ENCODE measurements at regions of chr16 and their contacts with region 1.

Region 1: GRCh38 chr16:68528686-68529379 is 10.3 kb upstream of the ZFP90 start:
- DNase-seq: peak; percentile 93
- ATAC-seq: peak; percentile 87
- H3K4me3 Mint-ChIP-seq: peak overlapping the region; percentile 82
- H3K27ac Mint-ChIP-seq: no peak overlapping the region
- H3K4me1 Mint-ChIP-seq: peaks cover 15% of the 10 kb centered on the region
- H3K27me3 Mint-ChIP-seq: no peaks in the 10 kb centered on the region
- CTCF ChIP-seq: peak; percentile 99

Region 2: DNA sequence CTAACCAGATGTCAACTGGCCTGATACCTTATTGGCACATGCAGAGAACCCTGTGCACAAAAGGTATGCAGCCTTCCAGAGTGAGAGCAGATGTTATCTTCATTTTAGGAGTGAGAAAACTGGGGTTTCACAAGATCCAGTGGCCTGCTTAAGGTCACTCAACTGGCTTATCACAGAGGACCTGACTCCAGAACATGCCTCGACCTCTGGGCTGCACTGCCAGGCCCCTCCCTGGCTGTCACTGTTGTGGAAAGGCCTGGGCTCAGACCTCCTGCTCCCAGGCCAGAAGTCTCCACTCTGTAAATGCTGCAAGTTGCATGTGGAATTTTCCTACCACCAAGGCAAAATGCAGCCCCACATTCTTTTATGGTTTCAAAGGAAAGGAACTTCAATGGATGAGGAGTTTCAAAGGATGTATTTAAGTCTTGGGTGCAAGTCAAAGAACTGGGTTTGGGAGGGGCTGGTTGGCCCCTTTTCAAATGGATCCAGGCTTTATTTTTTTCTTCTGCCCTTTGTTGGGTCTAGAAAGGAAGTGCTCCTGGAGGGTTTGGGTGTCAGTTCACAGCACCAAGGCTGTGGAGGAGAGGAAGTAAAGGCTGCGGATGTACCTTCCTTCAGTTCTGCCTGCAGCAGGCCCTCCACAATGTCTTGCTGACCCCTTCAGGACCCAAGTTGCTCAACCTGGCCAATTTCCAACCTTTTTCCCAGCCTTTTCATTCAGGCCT is 50.1 kb before region 1 on chr16:
- CTCF ChIA-PET with region 1: no interaction called
- POLR2A ChIA-PET with region 1: no interaction called
- intact Hi-C with region 1: no loop called
- DNase-seq: no peak
- ATAC-seq: no peak
- H3K4me3 Mint-ChIP-seq: no peak overlapping the region
- H3K27ac Mint-ChIP-seq: no peak overlapping the region
- H3K4me1 Mint-ChIP-seq: no peaks in the 10 kb centered on the region
- H3K27me3 Mint-ChIP-seq: no peaks in the 10 kb centered on the region
- CTCF ChIP-seq: no peak

Region 3: DNA sequence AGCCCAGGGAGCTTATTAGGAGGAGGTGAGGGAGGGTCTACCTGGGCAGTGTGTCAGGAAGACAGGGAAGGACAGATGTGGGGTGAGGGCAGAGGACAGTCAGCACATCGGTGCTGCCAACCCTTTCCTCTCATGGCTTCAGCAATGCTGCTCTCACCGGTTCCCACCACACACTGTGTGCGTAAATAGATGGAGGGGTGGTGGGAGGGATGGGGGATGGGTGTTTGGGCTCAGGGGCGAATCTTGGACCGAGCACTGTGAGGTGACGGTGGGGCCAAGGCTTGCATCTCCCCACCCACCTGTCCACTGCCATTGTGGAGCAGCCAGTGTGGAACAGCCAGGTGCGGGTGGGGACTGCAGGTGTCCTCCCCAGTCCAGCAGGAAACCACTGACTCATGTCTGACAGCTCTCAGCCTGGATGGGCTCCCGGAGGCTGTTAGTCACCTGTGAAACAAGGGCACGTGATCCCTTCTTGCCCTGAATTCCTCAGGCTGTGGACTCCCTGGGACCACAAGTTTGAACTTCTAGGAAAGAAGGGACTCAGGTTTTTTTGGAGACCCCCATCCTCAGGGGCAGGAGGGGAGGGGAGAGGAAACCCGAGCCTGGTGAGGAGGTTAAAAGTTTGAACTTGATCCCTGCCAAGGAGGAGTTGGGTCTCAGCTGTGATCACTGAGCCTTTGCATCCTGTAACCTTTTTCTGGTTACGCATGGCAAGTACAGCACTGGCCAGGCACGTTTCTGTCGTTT is 37.8 kb before region 1 on chr16:
- CTCF ChIA-PET with region 1: no interaction called
- POLR2A ChIA-PET with region 1: no interaction called
- intact Hi-C with region 1: no loop called
- DNase-seq: no peak
- ATAC-seq: peak; percentile 24
- H3K4me3 Mint-ChIP-seq: no peak overlapping the region
- H3K27ac Mint-ChIP-seq: no peak overlapping the region
- H3K4me1 Mint-ChIP-seq: no peaks in the 10 kb centered on the region
- H3K27me3 Mint-ChIP-seq: no peaks in the 10 kb centered on the region
- CTCF ChIP-seq: no peak

Region 4: DNA sequence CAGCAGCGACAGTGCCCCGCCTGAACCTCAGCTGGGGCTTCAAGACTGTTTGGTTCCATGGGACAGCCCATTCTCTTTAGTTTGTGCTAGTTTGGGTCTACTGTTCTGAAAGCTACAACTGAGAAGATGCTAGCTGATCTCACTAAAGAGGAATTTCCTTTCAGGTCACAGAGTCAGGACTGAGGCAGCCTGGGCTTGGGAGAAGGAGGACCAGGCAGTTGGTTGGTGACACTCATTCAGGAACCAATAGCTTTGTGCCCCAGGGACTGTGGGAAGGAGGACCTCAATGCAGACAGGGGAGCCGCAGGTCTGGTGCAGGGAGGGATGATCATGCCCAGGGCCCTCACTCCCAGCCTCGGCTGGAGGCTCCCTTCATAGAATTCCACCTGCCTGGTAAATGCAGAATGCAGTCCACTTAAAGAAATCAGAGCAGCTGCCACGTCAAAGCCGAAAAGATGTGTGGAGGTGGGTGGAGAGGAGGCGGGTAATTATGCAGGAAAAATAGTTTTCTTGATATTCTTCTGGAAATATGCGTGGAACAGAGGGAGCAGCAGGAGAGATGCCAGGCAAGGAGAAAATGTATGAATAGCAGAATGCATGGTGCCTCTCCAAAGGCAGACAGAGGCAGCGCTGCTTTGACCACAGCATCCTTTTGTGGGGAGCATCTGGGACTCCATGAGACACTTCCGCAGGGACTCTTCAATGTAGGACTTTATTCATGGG is 22.3 kb before region 1 on chr16:
- CTCF ChIA-PET with region 1: interaction called, 13 read pairs
- POLR2A ChIA-PET with region 1: no interaction called
- intact Hi-C with region 1: no loop called
- DNase-seq: no peak
- ATAC-seq: no peak
- H3K4me3 Mint-ChIP-seq: no peak overlapping the region
- H3K27ac Mint-ChIP-seq: no peak overlapping the region
- H3K4me1 Mint-ChIP-seq: no peaks in the 10 kb centered on the region
- H3K27me3 Mint-ChIP-seq: no peaks in the 10 kb centered on the region
- CTCF ChIP-seq: no peak

Region 5: DNA sequence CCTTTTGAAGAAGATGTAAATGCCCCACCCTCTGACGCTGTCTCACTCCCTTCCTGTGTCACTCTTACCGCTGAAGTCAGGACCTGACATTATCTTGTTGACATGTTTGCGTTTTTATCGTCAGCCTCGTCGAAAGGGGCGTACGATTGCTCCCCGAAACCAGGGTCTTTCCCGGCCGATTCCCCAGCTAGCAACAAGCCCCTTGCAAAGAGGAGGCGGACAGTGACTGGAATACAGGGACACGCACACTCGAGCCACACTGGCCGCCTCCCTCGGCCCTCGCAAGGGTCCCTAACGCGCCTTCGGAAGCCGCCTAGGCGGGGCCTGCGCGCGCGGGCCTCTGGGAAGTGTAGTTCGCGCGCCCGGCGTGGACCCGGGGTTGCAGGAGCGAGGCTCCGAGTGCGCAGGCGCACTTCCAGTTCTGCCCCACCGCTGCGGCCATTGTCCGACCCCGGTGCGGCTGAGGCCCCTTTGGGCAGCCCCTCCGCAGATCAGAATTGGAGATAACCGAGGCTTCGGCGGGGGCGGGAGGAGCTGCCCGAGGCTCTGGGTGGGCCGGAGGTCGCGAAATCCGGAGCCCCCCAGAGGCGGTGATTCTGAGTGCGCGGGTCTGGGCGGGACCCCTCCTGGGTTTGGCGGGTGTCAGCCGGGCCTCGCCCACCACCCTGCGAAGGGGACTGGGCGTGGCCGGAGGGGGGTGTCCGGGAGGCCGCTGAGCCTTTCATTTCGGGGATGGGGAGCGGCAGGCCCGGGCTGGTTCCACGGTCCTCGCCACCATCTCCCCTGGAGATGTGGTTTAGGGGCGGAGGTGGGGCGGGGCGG is 10.3 kb after region 1 on chr16 and contains the start of gene ZFP90:
- CTCF ChIA-PET with region 1: interaction called, 65 read pairs
- POLR2A ChIA-PET with region 1: interaction called, 13 read pairs
- intact Hi-C with region 1: no loop called
- DNase-seq: peak; percentile 91
- ATAC-seq: peak; percentile 95
- H3K4me3 Mint-ChIP-seq: peak within 1 kb of the TSS; percentile 94
- H3K27ac Mint-ChIP-seq: peak within 1 kb of the TSS; percentile 95
- H3K4me1 Mint-ChIP-seq: peaks cover 12% of the 10 kb centered on the region
- H3K27me3 Mint-ChIP-seq: no peaks in the 10 kb centered on the region
- CTCF ChIP-seq: no peak
- total RNA-seq, gene ZFP90: 27.6 to 32.6 TPM

Region 6: DNA sequence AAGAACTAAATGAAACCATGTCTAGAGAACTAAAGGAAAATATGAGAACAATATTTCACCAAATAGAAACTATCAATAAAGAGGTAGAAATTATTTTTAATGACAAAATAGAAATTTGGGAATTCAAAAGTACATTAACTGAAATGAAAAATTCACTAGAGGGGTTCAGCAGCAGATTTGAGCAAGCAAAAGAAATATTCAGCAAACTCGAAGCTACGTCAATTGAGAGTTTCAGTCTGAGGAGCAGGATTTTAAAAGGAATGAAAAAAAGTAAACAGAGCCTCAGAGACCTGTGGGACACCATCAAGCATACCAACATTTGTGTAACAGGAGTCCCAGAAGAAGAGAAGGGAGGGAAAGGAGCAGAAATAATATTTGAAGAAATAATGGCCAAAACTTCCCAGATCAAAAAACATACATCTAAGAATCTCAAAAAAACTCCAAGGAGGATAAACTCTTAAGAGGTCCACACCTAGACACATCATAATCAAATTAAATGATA is 48.6 kb after region 1 on chr16:
- CTCF ChIA-PET with region 1: interaction called, 12 read pairs
- POLR2A ChIA-PET with region 1: no interaction called
- intact Hi-C with region 1: no loop called
- DNase-seq: no peak
- ATAC-seq: no peak
- H3K4me3 Mint-ChIP-seq: no peak overlapping the region
- H3K27ac Mint-ChIP-seq: no peak overlapping the region
- H3K4me1 Mint-ChIP-seq: no peaks in the 10 kb centered on the region
- H3K27me3 Mint-ChIP-seq: no peaks in the 10 kb centered on the region
- CTCF ChIP-seq: no peak

Region 7: GRCh38 chr16:68668266-68668665 is 139.4 kb after region 1 on chr16:
- CTCF ChIA-PET with region 1: interaction called, 12 read pairs
- POLR2A ChIA-PET with region 1: no interaction called
- intact Hi-C with region 1: no loop called
- DNase-seq: peak; percentile 60
- ATAC-seq: peak; percentile 97
- H3K4me3 Mint-ChIP-seq: no peak overlapping the region
- H3K27ac Mint-ChIP-seq: peak overlapping the region; percentile 68
- H3K4me1 Mint-ChIP-seq: peaks cover 15% of the 10 kb centered on the region
- H3K27me3 Mint-ChIP-seq: peaks cover 2% of the 10 kb centered on the region
- CTCF ChIP-seq: no peak

Region 8: GRCh38 chr16:68689925-68690324 is 161.1 kb after region 1 on chr16:
- CTCF ChIA-PET with region 1: no interaction called
- POLR2A ChIA-PET with region 1: no interaction called
- intact Hi-C with region 1: no loop called
- DNase-seq: no peak
- ATAC-seq: no peak
- H3K4me3 Mint-ChIP-seq: no peak overlapping the region
- H3K27ac Mint-ChIP-seq: no peak overlapping the region
- H3K4me1 Mint-ChIP-seq: no peaks in the 10 kb centered on the region
- H3K27me3 Mint-ChIP-seq: no peaks in the 10 kb centered on the region
- CTCF ChIP-seq: no peak

Region 9: DNA sequence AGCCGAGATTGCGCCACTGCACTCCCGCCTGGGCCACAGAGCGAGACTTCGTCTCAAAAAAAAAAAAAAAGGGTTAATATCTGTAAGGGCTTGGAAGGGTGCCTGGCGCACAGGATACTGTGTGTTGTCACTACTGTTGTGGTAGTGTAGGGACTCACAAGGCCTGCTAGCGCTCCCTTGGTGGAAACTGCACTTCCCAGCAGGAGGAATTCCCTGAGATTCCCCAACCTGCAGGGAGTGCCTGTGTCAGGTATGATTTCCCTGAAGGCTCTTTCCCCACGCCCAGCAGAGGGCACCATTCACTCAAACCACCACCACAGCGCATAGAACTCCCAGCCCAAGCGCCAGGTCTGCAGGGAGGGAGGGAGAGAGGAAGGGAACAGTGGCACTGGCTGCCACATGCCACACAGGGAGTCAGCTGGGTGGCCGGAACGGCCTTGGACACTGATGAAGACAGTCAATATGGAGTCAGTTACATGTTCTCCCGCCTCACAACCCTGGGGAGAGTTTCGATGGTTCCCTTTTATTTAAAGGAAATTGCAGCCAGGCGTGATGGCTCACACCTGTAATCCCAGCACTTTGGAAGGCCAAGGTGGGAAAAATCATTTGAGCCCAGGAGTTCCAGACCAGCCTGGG is 175.5 kb after region 1 on chr16:
- CTCF ChIA-PET with region 1: interaction called, 3 read pairs
- POLR2A ChIA-PET with region 1: no interaction called
- intact Hi-C with region 1: loop called (anchors 5 kb)
- DNase-seq: peak; percentile 77
- ATAC-seq: peak; percentile 75
- H3K4me3 Mint-ChIP-seq: no peak overlapping the region
- H3K27ac Mint-ChIP-seq: no peak overlapping the region
- H3K4me1 Mint-ChIP-seq: no peaks in the 10 kb centered on the region
- H3K27me3 Mint-ChIP-seq: no peaks in the 10 kb centered on the region
- CTCF ChIP-seq: peak; percentile 90

Region 10: GRCh38 chr16:69123910-69124309 is 595.1 kb after region 1 on chr16:
- CTCF ChIA-PET with region 1: interaction called, 13 read pairs
- POLR2A ChIA-PET with region 1: no interaction called
- intact Hi-C with region 1: no loop called
- DNase-seq: peak; percentile 75
- ATAC-seq: peak; percentile 83
- H3K4me3 Mint-ChIP-seq: no peak overlapping the region
- H3K27ac Mint-ChIP-seq: no peak overlapping the region
- H3K4me1 Mint-ChIP-seq: peaks cover 21% of the 10 kb centered on the region
- H3K27me3 Mint-ChIP-seq: no peaks in the 10 kb centered on the region
- CTCF ChIP-seq: peak; percentile 73